ENCODE measurements at regions of chr11 and their contacts with region 1.

Region 1: GRCh38 chr11:58024601-58025091 is 965 bp downstream of the OR9Q1 start:
- DNase-seq: peak; percentile 60
- ATAC-seq: no peak
- H3K4me3 ChIP-seq: no peak overlapping the region
- H3K27ac ChIP-seq: peak overlapping the region; percentile 66; the same call in 1 of the 2 replicates
- H3K4me1 ChIP-seq: peaks cover 23% of the 10 kb centered on the region
- H3K27me3 ChIP-seq: no peaks in the 10 kb centered on the region
- CTCF ChIP-seq: no peak
- POLR2A ChIP-seq: no peak
- RAD21 ChIP-seq: no peak

Region 2: DNA sequence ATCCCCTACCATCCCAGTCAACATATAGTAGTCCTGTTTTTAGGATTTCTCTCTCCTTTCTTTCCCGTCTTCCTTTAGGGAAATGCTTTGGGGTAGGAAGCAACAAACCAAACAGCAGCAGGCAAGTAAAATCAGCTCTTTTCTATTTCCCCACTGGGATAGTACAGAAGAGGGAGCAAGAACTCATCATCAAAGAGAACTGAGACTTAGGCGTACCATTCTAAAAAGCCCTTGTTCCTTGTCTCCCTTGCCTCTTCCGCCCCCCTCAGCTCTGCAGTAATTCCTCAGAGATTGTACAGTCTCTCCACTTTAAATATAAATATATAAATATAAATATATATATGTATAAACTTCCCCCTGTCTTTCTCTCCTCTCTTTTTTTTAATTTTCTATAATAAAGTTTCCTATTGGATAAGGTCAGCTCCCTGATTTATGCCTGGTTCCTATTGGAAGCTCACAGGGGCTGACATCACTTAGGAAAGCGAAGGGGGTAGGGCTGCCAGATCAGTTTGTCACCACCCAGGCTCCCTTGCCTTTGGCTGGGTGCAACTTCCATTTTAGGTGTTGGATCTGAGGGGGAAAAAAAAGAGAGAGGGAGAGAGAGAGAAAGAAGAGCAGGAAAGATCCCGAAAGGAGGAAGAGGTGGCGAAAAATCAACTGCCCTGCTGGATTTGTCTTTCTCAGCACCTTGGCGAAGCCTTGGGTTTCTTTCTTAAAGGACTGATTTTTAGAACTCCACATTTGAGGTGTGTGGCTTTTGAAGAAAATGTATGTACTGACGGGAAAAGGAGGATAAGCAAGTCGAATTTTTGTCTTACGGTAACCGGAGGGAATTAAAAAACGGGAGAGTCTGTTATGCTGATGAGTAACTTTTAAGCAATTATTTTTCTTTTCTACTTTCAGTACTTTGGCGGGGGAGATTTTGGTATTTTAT is 263.1 kb before region 1 on chr11 and contains the start of gene CTNND1:
- CTCF ChIA-PET with region 1: no interaction called
- POLR2A ChIA-PET with region 1: interaction called, 5 read pairs
- dilution Hi-C with region 1: no loop called
- in situ Hi-C with region 1: no loop called
- intact Hi-C with region 1: loop called (anchors 1 kb)
- DNase-seq: peak; percentile 98
- ATAC-seq: peak; percentile 96
- H3K4me3 ChIP-seq: peak within 1 kb of the TSS; percentile 99
- H3K27ac ChIP-seq: peak within 1 kb of the TSS; percentile 100
- H3K4me1 ChIP-seq: peaks cover 8% of the 10 kb centered on the region
- H3K27me3 ChIP-seq: no peaks in the 10 kb centered on the region
- CTCF ChIP-seq: no peak
- POLR2A ChIP-seq: peak; percentile 84; the same call in 1 of the 2 replicates
- RAD21 ChIP-seq: no peak
- total RNA-seq, gene CTNND1: 193 and 229 TPM in 2 replicates

Region 3: GRCh38 chr11:57940044-57940756 is 84.4 kb before region 1 on chr11:
- CTCF ChIA-PET with region 1: no interaction called
- POLR2A ChIA-PET with region 1: no interaction called
- dilution Hi-C with region 1: no loop called
- in situ Hi-C with region 1: no loop called
- intact Hi-C with region 1: no loop called
- DNase-seq: no peak
- ATAC-seq: peak; percentile 53
- H3K4me3 ChIP-seq: no peak overlapping the region
- H3K27ac ChIP-seq: no peak overlapping the region
- H3K4me1 ChIP-seq: peaks cover 2% of the 10 kb centered on the region; the same call in 1 of the 2 replicates
- H3K27me3 ChIP-seq: no peaks in the 10 kb centered on the region; the same call in 1 of the 2 replicates
- CTCF ChIP-seq: no peak
- POLR2A ChIP-seq: no peak
- RAD21 ChIP-seq: no peak

Region 4: DNA sequence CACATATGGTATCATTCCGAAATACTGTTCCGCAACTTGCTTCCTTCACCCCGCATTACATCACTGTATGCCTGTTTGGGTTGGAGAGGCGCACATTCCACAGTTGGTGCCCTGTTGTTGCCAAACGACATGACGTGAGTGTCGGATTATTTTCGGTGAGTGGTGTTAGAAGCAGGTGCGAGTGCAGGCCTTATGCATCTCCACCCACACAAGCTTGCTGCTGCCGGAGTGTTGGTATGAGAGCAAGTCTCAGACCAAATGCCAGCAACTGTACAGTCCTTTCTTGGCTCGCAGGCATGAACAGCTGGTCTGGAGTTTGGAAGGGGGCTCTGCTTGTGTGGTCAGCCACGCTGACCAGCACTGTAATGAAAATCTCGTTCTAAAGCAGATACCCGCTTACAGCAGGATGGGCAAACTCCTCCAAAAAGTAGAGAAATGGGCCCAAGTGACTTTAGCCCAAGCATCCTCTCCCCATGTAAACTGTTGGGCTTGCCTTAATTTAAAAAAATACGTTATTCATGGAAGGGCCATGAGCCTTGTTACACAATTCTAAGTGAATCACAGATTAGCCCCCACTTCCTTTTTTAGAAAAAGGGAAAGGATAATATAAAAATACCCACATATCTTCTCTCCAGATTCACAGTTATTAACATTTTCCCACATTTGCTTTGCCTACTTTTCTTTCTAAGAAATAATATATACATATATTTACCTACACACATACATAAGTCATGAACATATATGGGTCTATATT is 49.6 kb before region 1 on chr11:
- CTCF ChIA-PET with region 1: no interaction called
- POLR2A ChIA-PET with region 1: no interaction called
- dilution Hi-C with region 1: no loop called
- in situ Hi-C with region 1: no loop called
- intact Hi-C with region 1: no loop called
- DNase-seq: no peak
- ATAC-seq: no peak
- H3K4me3 ChIP-seq: no peak overlapping the region
- H3K27ac ChIP-seq: no peak overlapping the region
- H3K4me1 ChIP-seq: peaks cover 2% of the 10 kb centered on the region; the same call in 1 of the 2 replicates
- H3K27me3 ChIP-seq: peaks cover 3% of the 10 kb centered on the region; the same call in 1 of the 2 replicates
- CTCF ChIP-seq: no peak
- POLR2A ChIP-seq: no peak
- RAD21 ChIP-seq: no peak

Region 5: GRCh38 chr11:58059007-58059350 is 34.3 kb after region 1 on chr11:
- CTCF ChIA-PET with region 1: interaction called, 11 read pairs
- POLR2A ChIA-PET with region 1: interaction called, 3 read pairs
- dilution Hi-C with region 1: no loop called
- in situ Hi-C with region 1: no loop called
- intact Hi-C with region 1: loop called (anchors 1 kb)
- DNase-seq: peak; percentile 92
- ATAC-seq: peak; percentile 81
- H3K4me3 ChIP-seq: no peak overlapping the region
- H3K27ac ChIP-seq: peak overlapping the region; percentile 99
- H3K4me1 ChIP-seq: peaks cover 32% of the 10 kb centered on the region
- H3K27me3 ChIP-seq: no peaks in the 10 kb centered on the region
- CTCF ChIP-seq: no peak
- POLR2A ChIP-seq: no peak
- RAD21 ChIP-seq: peak; percentile 5; the same call in 1 of the 2 replicates

Region 6: DNA sequence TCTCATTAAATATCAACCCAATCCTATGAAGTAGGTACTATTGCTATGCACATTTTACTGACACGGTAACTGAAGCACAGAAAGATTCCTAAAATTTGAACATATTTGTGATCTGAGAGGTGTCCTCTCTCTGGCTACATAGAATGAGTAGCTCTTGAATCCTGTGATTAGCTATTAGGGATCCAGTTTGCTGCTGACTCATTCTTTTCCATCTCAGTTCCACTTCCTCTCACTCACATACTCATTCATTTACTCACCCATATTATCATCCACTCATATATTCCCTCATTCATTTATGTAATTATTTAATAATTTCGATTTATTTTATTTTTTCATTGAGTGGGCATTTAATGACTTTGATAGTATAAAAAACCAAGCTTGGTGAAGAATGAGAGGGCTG is 291.5 kb after region 1 on chr11:
- CTCF ChIA-PET with region 1: no interaction called
- POLR2A ChIA-PET with region 1: no interaction called
- dilution Hi-C with region 1: no loop called
- in situ Hi-C with region 1: no loop called
- intact Hi-C with region 1: loop called (anchors 1 kb)
- DNase-seq: peak; percentile 80
- ATAC-seq: peak; percentile 43
- H3K4me3 ChIP-seq: no peak overlapping the region
- H3K27ac ChIP-seq: peak overlapping the region; percentile 98
- H3K4me1 ChIP-seq: peaks cover 13% of the 10 kb centered on the region
- H3K27me3 ChIP-seq: no peaks in the 10 kb centered on the region
- CTCF ChIP-seq: no peak
- POLR2A ChIP-seq: no peak
- RAD21 ChIP-seq: no peak

Measured in IMR-90 (cell line).